ENCODE measurements at regions of chr3 and their contacts with region 1.

Region 1: DNA sequence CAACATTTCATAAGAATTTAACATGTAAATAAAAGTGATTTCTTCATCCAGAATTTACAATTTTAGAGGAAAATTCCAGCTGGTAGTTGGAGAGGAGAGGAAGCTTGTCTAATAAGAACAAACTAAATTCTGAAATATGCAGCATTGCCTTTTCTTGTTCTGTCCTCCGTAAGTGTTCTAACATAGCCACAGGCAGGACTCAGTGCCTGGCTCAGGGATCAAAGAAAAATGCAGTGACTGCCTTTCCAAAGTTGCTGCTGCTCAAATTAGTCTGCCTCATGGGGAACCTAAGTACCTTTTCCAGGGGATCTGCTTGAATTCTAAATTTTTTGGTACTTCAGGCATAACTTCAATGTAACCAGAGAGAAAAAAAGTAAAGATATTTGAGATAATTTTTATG is 713.0 kb upstream of the CADM2 start:
- H3K4me3 Mint-ChIP-seq: no peak overlapping the region
- H3K27ac Mint-ChIP-seq: no peak overlapping the region
- H3K4me1 Mint-ChIP-seq: no peaks in the 10 kb centered on the region
- H3K27me3 Mint-ChIP-seq: no peaks in the 10 kb centered on the region

Region 2: DNA sequence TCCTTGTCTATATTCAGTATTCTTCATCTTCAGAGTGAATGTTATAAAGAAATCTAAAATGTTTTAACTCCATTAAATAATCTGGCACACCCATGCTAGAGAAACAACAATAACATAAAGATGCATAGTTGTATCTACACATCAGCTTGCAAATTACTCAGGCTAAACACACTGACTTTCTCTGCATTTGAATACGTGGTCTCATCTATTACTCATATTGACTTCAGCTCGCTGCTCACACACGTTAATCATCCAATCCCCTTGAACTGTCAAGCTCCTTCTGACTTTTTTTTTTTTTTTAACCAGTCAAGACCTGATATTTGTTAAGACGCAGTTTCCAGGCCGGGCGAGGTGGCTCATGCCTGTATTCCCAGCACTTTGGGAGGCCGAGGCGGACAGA is 424.3 kb before region 1 on chr3:
- intact Hi-C with region 1: no loop called
- H3K4me3 Mint-ChIP-seq: no peak overlapping the region
- H3K27ac Mint-ChIP-seq: no peak overlapping the region
- H3K4me1 Mint-ChIP-seq: no peaks in the 10 kb centered on the region
- H3K27me3 Mint-ChIP-seq: no peaks in the 10 kb centered on the region

Region 3: DNA sequence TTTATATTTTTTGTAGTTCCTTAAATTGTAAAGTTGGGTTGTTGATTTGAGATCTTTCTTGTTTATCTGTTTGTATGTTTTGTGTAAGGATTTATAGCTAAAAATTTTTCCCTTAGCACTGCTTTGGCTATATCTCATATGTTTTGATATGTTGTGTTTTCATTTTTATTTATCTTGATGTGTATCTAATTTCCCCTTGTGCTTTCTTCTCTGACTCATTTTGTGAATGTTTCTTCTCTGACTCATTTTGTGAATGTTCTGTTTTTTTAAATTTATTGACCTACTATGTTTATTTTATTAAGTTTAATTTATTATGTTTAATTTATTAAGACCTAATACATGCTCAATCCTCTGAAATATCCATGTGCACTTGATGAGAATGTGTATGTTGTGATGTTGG is 80.5 kb before region 1 on chr3:
- intact Hi-C with region 1: loop called (anchors 10 kb)
- H3K4me3 Mint-ChIP-seq: no peak overlapping the region
- H3K27ac Mint-ChIP-seq: no peak overlapping the region
- H3K4me1 Mint-ChIP-seq: no peaks in the 10 kb centered on the region
- H3K27me3 Mint-ChIP-seq: no peaks in the 10 kb centered on the region